BJ (cell line): ENCODE measurements at regions of chr12 and their contacts with region 1.

Region 1: DNA sequence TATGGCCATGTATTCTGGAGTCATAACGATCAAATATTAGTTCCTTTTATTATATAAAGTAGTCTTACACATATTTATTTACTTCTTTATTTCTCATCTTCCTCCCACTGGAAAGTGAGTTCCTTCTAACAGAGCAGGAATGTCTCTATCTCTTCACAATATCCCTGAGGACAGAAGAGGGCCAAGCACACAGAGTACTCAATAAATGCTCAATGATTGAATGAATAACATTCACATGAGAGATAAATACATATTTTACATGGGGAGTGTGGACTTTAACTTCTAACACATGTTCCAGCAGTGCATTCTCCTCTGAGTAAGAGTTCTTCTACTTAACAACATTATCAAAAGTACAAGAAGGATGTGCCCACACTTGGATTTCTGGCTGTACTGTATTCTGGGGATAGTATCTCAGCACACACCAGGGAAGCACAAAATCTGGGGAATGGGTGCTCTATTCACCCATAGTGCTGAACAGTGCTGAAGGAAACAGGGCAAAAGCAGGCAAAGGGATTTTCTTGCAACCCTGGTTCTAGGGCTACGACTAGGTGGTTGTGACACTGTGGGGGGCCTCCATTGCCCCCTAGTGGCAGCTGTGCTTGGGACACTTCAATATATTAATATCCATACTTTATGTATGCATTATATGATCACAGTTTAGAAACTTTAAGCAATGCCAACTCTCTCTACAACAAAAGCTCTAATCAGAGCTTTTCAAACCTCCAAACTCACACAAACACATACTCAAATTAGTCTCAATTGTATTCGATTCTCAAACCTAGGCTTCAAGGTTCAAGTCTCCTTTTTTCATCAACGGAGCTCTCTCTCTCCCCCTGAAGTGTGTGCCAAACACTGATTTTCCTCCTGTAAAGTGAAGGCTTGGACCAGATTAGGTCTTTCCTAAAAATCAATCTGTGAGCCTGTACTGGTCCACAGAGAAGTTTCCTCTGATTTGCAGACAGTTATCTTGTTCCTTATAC is 115.5 kb downstream of the SLC2A13 start:
- DNase-seq: no peak
- H3K4me3 ChIP-seq: no peak overlapping the region
- H3K27me3 ChIP-seq: no peaks in the 10 kb centered on the region
- CTCF ChIP-seq: peak; percentile 88

Region 2: DNA sequence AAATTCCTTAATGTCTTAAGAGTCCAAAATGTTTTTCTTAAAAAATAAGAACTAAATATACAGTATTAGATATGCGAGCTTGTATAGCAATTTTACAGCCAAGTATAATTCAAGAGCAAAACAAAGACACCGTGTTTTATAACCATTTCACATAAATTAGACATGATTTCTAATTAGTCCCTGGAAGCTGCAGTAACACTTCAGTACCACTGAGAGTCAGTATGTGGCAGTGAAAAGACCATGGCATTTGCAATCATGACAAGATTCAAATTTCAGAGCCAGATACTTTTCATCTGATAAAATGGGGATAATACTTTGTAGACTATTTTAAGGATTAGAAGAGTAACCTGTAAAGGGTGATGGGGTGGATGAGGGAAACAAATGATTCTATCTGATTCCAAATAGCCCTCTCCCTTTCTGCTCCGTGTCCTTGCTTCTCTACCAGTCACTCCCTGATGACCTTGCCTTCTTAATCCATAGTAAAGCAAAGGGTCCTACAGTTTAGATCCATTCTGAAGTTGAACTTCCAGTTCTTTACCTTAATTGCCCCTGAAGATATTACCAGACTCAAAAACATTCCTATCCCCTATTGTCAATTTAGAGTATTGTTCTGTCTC is 225.4 kb before region 1 on chr12:
- CTCF ChIA-PET with region 1: interaction called, 52 read pairs
- POLR2A ChIA-PET with region 1: no interaction called
- DNase-seq: no peak
- H3K4me3 ChIP-seq: no peak overlapping the region
- H3K27me3 ChIP-seq: no peaks in the 10 kb centered on the region
- CTCF ChIP-seq: peak; percentile 81

Region 3: DNA sequence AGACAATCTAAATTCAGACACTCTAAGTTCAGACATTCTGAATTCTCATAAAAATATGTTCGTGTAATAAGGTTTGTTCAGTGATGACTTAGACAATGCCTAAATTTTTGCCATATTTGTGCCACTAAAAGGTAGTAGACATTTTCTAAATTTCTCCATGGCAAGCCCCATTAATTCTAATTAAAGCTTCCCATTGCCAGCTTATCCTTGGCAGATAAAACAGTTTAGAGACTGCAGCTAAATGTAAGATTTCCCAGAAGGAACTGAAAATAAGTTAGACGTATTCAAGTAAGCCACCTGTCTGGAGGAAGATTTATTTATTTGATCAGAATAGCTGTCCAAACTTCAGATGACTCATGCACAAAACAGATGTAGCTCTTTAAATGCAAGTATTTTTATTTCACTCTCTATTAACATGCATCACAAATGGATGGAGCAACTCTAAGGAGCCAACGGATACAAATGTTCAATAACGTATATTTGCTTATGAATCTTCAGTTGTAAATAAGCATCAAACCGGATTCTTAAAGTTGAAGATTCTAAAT is 15.0 kb before region 1 on chr12:
- CTCF ChIA-PET with region 1: interaction called, 17 read pairs
- POLR2A ChIA-PET with region 1: no interaction called
- DNase-seq: no peak
- H3K4me3 ChIP-seq: no peak overlapping the region
- H3K27me3 ChIP-seq: no peaks in the 10 kb centered on the region
- CTCF ChIP-seq: no peak

Region 4: GRCh38 chr12:40010899-40011774 is 20.7 kb after region 1 on chr12:
- CTCF ChIA-PET with region 1: interaction called, 17 read pairs
- POLR2A ChIA-PET with region 1: no interaction called
- DNase-seq: no peak
- H3K4me3 ChIP-seq: no peak overlapping the region
- H3K27me3 ChIP-seq: no peaks in the 10 kb centered on the region
- CTCF ChIP-seq: peak; percentile 82